ENCODE measurements at regions of chr2 and their contacts with region 1.

Region 1: GRCh38 chr2:48589170-48589767 is 28.4 kb upstream of the GTF2A1L start:
- DNase-seq: no peak
- ATAC-seq: peak in 1 of 2 donors; percentile 50

Region 2: DNA sequence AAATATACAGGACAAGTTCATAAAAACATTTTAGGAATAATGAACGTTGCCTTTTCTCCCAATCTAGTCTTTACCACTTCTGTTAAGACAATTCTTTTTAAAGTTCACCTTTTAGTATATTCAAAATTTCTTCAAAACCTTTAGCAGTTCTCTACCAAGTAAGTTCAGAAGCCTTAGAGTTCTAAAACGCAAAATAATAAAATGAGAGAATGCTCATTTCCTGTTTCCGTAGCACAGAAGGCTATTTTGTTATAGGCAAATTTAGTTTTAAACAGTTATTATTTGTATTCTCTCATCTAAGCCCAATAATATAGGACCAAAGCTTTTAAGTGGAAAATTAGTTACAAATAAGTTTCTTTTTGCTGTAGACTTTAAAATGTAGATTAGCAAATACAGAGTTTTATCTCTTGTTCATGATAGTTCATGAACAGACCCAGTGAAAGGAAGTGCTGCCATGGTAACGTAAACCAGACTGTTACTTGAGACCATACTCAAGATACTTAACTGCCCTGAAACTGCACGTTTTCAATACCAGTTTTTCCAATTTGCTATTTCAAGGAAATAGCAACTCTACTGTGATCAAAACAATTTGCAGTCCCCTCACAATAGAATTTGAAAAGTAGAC is 232.5 kb before region 1 on chr2:
- intact Hi-C with region 1: no loop called
- DNase-seq: no peak
- ATAC-seq: peak in 1 of 2 donors; percentile 27

Region 3: DNA sequence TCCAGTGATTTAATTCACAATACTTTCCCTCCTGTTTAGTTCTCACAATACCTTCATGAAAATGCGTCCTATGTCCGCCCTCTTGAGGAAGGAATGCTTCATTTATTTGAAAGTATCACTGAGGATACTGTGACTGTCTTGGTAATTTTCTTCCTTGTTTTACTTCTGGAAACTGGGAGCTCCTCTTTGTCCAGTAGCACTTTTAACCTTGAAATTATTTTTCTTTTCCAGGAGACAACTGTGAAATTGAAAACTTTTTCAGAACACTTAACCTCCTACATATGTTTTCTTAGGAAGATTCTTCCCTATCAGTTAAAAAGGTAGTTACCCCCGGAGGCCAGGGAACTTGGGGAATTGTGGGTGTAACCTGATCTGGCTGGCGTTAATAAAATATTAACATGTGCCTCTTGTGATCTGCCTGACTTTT is 118.2 kb before region 1 on chr2:
- intact Hi-C with region 1: loop called in 1 of 2 experiments (anchors 10 kb)
- DNase-seq: no peak
- ATAC-seq: peak; percentile 62 to 80

Region 4: DNA sequence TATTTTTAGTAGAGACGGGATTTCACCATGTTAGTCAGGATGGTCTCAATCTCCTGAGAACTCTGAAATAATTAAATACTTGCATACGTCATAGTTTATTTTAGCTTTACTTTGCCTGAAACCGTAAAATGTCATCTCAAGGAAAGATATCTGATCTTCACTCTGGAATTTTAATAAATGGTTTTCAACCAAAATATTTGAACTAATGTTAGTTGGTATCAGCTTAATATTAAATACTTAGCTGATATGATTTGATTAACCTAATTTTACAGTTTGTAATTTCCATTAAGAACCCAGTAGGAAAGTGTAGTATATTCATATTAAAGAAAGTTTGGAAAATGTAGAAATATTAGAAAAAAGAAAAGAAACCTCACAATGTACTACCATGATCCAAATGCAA is 100.7 kb before region 1 on chr2:
- intact Hi-C with region 1: no loop called
- DNase-seq: no peak
- ATAC-seq: no peak

Region 5: DNA sequence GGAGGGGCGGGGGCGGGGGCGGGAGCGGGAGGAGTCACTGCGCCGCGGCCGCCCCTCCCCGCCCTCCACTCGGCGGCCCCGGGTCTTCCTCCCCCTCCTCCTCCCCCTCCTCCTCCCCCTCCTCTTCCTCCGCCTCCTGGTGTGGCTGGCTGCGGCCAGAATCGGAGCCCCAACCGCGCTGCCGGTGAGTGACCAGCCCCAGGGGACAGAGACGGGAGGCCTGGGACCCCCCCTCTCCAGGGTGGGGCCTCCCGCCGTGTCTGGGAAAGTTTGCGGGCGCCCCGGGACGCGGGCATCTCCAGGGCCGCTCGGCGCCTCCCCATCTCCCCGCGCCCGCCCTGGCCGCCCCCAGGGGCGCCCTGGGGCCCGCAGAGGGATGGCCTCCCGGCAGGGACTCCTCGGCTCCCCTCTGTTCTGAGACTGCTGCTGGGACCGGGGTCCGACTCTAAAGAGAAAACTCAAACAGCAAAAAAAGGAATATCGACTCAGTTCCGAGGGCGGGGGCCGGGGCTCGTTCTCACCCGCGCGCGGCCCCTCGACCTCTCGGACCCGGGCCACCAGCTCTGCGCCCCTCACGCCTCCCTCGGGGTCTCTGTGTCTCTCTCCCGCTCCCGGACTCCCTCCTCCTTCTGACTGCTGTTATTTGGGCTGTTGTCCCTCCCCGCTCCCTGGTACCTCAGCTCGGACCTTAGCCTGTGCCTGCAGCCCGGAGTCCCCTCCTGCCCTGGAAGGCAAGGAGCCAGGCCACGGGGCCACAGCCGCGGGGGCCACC is 59.0 kb before region 1 on chr2 and contains the start of gene STON1:
- intact Hi-C with region 1: no loop called
- DNase-seq: peak; percentile 60
- ATAC-seq: peak; percentile 76 to 79
- total RNA-seq, gene STON1: 16.7 to 19.1 TPM

Region 6: DNA sequence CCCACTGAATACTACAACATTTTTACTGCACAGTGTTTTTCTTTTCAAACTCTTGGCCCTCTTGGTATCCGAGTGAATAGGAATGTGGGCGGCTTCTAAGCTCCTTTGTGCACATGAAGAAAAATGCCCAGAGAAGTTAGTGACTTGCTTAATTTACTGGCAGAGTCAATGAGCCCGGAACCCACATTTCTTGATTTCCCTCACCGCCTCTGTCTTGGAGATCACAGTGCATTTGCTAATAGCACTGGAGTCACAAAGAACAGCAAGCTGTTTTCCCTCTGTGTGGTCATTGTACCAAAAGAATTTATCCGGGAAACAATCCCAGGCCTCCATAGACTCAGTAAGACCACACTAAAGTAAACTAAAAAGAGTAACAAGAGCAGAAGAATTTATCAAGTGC is 40.4 kb before region 1 on chr2:
- intact Hi-C with region 1: no loop called
- DNase-seq: no peak
- ATAC-seq: peak in 1 of 2 donors; percentile 44

Measured in left cardiac atrium (tissue), 4 donors.